ENCODE measurements at regions of chr11 and their contacts with region 1.

Region 1: GRCh38 chr11:8911029-8911826 is at the start of gene AKIP1:
- DNase-seq: peak; percentile 96
- H3K4me3 ChIP-seq: peak within 1 kb of the TSS; percentile 79 to 95 (median 92)
- H3K27ac ChIP-seq: peak within 1 kb of the TSS; percentile 91 to 98 (median 98)
- H3K4me1 ChIP-seq: peaks cover 20 to 50% (median 45%) of the 10 kb centered on the region in 4 donors
- H3K27me3 ChIP-seq: no peaks in the 10 kb centered on the region
- CTCF ChIP-seq: peak in 1 of 3 experiments; percentile 2
- EP300 ChIP-seq: no peak
- POLR2A ChIP-seq: peak; percentile 24
- total RNA-seq, gene AKIP1: 30.5 to 56.4 (median 41.7) TPM

Region 2: GRCh38 chr11:8688414-8689362 is 222.5 kb before region 1 on chr11:
- intact Hi-C with region 1: loop called (anchors 10 kb)
- DNase-seq: peak; percentile 97
- H3K4me3 ChIP-seq: peak overlapping the region; percentile 57 to 80 (median 64)
- H3K27ac ChIP-seq: peak overlapping the region; percentile 79 to 90 (median 84)
- H3K4me1 ChIP-seq: peaks cover 21 to 47% (median 39%) of the 10 kb centered on the region in 4 donors
- H3K27me3 ChIP-seq: no peaks in the 10 kb centered on the region
- CTCF ChIP-seq: peak; percentile 19 to 46 (median 37)
- EP300 ChIP-seq: no peak
- POLR2A ChIP-seq: peak; percentile 34

Region 3: DNA sequence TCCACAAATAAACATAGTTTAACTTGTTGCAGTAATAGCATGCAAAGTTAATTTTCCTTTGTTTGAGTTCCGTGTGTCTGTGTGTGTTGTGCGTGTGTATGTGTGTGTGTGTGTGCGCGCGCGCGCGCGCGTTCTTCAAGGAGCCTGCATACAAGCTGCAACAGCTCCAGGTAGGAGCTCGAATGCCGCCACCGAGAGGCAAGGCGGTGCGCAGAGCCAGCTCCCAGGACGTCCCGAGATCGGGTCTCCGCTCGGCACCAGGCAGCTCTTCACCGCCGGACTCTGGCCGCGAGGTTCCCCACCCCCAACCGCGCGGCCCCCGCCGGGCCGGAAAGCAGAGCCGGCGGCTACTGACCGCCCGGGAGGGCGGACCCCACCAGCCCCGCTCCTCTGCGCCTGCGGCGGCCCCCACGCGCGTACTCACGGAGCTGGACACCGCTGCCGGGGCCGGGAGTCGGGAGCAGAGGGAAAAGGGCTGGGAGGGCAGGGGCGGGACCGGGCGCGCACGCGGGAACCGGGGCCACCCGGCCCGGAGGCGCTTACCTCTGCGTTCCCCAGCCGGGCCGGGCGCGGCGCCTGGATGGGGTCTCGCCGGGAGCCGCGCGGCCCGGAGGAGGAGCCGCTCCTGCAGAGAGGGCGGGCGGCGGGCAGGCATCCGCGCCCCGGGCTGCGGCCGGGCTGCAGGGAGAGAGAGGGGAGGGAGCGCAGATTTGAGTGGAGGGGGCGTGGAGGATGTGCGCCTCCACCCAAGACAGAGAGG is 40.6 kb before region 1 on chr11:
- intact Hi-C with region 1: loop called (anchors 5 kb)
- DNase-seq: no peak
- H3K4me3 ChIP-seq: peak overlapping the region; percentile 84 to 98 (median 92)
- H3K27ac ChIP-seq: peak overlapping the region; percentile 89 to 96 (median 92)
- H3K4me1 ChIP-seq: peaks cover 13 to 80% (median 64%) of the 10 kb centered on the region in 4 donors
- H3K27me3 ChIP-seq: no peaks in the 10 kb centered on the region
- CTCF ChIP-seq: no peak
- EP300 ChIP-seq: no peak
- POLR2A ChIP-seq: no peak